ENCODE measurements at regions of chr1 and their contacts with region 1.

Region 1: GRCh38 chr1:71587961-71588360 is 507.1 kb upstream of the ZRANB2 start:
- DNase-seq: peak; percentile 18
- H3K4me3 ChIP-seq: no peak overlapping the region
- H3K27ac ChIP-seq: no peak overlapping the region
- H3K4me1 ChIP-seq: no peaks in the 10 kb centered on the region
- H3K27me3 ChIP-seq: no peaks in the 10 kb centered on the region
- CTCF ChIP-seq: peak; percentile 34 to 49

Region 2: DNA sequence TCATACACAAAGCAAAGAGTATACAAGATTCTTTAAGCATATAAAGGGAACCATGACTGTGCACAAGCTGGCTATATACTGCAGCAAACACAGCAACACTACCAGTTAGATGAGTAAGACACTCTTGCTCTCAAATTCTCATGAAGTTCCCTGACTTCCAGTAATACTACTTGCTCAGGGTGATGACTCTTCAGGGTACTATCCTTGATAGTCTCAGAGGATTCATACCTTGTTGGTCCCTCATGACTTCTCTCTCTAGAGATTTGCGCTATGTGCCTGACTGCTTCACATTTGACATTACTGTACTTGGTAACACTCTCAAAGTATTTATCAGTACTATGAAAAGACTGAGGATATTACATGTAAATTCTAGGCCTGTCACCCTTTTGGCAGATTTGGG is 347.3 kb before region 1 on chr1:
- CTCF ChIA-PET with region 1: no interaction called
- dilution Hi-C with region 1: no loop called
- in situ Hi-C with region 1: no loop called
- intact Hi-C with region 1: no loop called
- DNase-seq: no peak
- H3K4me3 ChIP-seq: no peak overlapping the region
- H3K27ac ChIP-seq: no peak overlapping the region
- H3K4me1 ChIP-seq: no peaks in the 10 kb centered on the region
- H3K27me3 ChIP-seq: no peaks in the 10 kb centered on the region
- CTCF ChIP-seq: no peak

Region 3: DNA sequence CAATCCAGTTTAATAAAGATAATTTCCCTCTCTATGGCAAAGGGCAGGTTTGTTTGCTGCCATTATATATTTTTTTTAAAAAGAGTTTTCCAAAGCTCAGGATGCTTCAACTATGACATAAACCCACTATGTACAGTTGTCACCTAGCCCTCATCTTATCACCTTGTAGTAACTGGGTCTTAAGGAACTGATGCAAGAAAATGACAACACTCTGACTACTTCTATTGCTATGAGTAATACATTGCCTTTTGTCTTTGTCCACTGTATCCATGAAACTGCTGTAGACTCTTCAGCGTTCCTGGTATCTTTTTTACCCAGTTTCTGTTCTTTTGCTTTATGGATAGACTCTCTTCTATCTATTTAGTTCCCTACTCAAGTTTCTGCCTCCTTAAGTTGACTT is 107.9 kb after region 1 on chr1:
- CTCF ChIA-PET with region 1: no interaction called
- dilution Hi-C with region 1: no loop called
- in situ Hi-C with region 1: no loop called
- intact Hi-C with region 1: loop called (anchors 10 kb)
- DNase-seq: no peak
- H3K4me3 ChIP-seq: no peak overlapping the region
- H3K27ac ChIP-seq: no peak overlapping the region
- H3K4me1 ChIP-seq: no peaks in the 10 kb centered on the region
- H3K27me3 ChIP-seq: no peaks in the 10 kb centered on the region
- CTCF ChIP-seq: no peak